ENCODE measurements at regions of chr2 and their contacts with region 1.

Region 1: GRCh38 chr2:241102239-241102803 is at the start of gene MTERF4:
- DNase-seq: peak in 1 of 2 donors; percentile 89
- H3K4me3 ChIP-seq: peak within 1 kb of the TSS; percentile 67 to 93
- H3K27ac ChIP-seq: peak within 1 kb of the TSS; percentile 86
- H3K4me1 ChIP-seq: peaks cover 31% of the 10 kb centered on the region
- H3K27me3 ChIP-seq: no peaks in the 10 kb centered on the region
- CTCF ChIP-seq: no peak
- POLR2A ChIP-seq: no peak
- total RNA-seq, gene MTERF4: 30.2 TPM

Region 2: DNA sequence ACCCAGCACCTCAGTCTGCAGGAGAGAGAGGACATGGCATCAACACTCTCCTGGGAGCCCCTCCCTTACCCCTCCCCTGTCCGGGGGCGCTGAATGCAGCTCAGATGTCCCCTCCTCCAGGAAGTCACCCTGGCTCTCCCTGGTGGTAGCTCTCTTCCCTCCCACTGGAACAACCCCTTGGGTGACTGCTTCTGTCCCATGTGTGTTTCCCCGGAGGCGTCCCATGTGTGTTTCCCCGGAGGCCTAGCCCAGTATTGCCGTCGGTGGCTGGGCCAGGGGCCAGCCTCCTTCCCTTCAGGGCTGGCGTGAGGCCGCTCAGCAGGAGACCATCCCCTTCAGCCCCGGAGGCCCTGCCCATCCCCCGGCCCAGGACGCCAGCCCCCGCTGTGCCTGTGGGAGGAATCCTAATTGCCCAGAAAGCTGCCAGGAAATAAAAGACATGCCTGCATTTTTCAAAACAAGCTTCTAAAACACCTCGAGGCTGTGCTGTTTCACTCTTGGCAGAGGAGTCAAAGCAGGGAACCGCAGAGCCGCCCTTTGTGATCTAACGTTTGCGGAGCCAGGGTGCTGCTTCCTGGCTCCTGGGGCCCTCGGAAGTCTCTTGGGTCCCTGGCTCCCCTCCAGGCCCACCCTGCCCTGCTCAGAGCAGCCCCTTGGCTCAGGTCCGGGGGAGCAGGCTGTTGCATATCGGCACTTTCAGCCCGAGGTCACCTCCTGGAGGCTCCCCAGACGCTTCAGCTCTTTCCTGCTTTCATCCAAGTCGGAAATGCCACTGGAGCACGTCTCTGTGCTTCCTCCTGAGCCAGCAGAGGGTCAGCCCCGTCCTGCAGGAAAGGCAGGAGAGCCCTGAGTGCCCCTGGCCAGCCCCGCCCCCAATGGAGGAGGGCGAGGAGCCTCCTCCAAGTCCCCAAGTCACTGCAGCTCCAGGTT is 92.5 kb before region 1 on chr2:
- intact Hi-C with region 1: no loop called
- DNase-seq: peak; percentile 81 to 89
- H3K4me3 ChIP-seq: peak overlapping the region; percentile 23 to 40
- H3K27ac ChIP-seq: peak overlapping the region; percentile 75
- H3K4me1 ChIP-seq: peaks cover 49% of the 10 kb centered on the region
- H3K27me3 ChIP-seq: no peaks in the 10 kb centered on the region
- CTCF ChIP-seq: no peak
- POLR2A ChIP-seq: no peak

Region 3: GRCh38 chr2:241217320-241218031 is 115.2 kb after region 1 on chr2:
- intact Hi-C with region 1: loop called (anchors 10 kb)
- DNase-seq: no peak
- H3K4me3 ChIP-seq: peak overlapping the region; percentile 49 to 71
- H3K27ac ChIP-seq: peak overlapping the region; percentile 81
- H3K4me1 ChIP-seq: peaks cover 11% of the 10 kb centered on the region
- H3K27me3 ChIP-seq: no peaks in the 10 kb centered on the region
- CTCF ChIP-seq: peak in 1 of 3 experiments; percentile 4
- POLR2A ChIP-seq: no peak

Region 4: DNA sequence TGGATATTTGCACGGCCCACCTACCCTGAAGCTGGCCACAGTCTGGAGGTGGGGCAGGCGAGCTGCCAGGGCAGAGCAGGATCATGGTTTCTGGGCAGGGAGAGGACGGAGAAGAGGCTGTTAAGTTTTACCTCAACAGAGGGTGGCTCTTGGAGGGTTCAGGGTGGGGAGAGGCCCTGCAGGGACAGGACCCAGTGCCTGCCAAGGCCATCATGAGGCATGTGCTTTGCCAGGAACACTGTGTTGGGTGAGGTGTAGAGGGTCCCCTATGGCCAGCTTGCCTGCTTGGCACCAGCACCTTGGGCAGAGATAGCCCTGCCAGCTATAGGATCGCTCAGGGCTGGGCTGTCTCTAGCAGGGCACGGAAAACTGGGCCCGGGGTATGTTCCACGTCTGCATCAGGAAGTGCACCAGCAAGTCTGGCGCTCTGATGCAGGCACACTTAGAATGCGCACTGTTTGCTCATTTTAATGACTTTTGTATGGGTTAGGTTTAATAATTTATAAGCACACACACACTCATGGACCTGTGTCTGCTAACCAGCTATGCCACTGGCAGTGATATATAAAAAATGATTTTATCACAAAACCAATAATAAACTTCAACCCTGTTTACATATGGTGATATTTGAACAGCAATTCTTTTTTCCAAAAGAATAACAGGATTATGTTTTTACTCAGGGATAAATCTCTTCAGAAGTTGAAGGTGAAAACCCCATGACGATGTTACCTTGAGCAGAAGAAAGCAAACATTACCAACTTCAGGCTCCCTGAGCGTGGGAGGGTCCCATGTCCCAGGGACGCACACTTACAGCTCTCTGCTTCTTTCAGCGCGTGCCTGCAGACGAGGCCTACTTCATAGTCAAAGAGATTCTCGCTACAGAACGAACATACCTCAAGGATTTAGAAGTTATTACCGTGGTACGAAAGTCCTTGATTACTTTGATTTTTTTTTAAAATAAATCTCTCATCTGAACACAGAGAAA is 359.7 kb after region 1 on chr2:
- intact Hi-C with region 1: no loop called
- DNase-seq: no peak
- H3K4me3 ChIP-seq: no peak overlapping the region
- H3K27ac ChIP-seq: no peak overlapping the region
- H3K4me1 ChIP-seq: no peaks in the 10 kb centered on the region
- H3K27me3 ChIP-seq: no peaks in the 10 kb centered on the region
- CTCF ChIP-seq: no peak
- POLR2A ChIP-seq: no peak

Measured in vagina (tissue), 2 donors.